K562 (cell line): ENCODE measurements at regions of chr16 and their contacts with region 1.

Region 1: GRCh38 chr16:49592546-49593423 is 219.2 kb downstream of the C16orf78 start:
- DNase-seq: peak; percentile 44 to 74 (median 69)
- ATAC-seq: peak; percentile 92
- H3K4me3 ChIP-seq: no peak overlapping the region
- H3K27ac ChIP-seq: no peak overlapping the region
- H3K4me1 ChIP-seq: no peaks in the 10 kb centered on the region
- H3K27me3 ChIP-seq: peaks cover 15 to 42% of the 10 kb centered on the region in 2 experiments; a peak in 4 of 5 replicates
- CTCF ChIP-seq: peak; percentile 60 to 73 (median 62)
- EP300 ChIP-seq: no peak
- POLR2A ChIP-seq: no peak
- RAD21 ChIP-seq: peak in 1 of 2 experiments; percentile 47; a peak in 2 of 4 replicates

Region 2: DNA sequence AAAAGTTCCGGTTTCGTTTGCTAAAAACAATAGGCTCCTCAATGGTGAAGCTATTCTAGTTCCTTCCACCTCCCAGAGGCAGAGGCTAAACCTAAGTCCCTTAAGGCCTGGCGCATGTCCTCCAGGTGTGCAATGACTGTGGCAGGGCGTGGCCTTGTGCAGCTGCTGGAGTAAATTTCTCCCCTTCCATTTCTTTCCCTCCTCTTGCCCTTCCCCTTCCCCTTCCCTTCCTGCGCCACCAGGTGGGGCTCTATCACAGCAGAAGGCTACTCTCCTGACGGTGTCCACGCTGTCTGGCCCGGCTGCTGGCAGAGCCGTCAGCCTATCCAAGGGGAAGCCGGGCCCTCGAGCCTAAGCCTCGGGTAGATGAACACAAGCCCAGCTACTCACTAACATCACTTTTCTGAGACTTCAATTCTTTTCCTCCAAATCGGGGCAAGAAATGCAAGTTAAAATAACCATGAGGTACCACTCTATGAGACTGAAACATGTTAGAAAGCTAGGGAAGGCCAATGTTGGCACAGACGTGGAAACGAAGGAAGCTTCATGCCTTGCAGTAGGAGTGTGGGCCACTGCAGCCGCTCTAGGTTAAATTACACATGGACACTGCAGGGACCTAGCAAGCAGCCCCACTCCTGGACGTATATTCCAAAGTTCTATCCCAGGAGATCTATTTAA is 184.8 kb before region 1 on chr16:
- CTCF ChIA-PET with region 1: interaction called, 8 read pairs
- POLR2A ChIA-PET with region 1: no interaction called
- in situ Hi-C with region 1: no loop called
- intact Hi-C with region 1: loop called (anchors 1 kb)
- DNase-seq: peak; percentile 65 to 76 (median 74)
- ATAC-seq: peak; percentile 99
- H3K4me3 ChIP-seq: no peak overlapping the region
- H3K27ac ChIP-seq: no peak overlapping the region
- H3K4me1 ChIP-seq: no peaks in the 10 kb centered on the region
- H3K27me3 ChIP-seq: no peaks in the 10 kb centered on the region; a peak in 1 of 5 replicates
- CTCF ChIP-seq: peak; percentile 79 to 82 (median 81)
- EP300 ChIP-seq: no peak
- POLR2A ChIP-seq: no peak
- RAD21 ChIP-seq: peak; percentile 64 to 84

Region 3: GRCh38 chr16:49625316-49626065 is 32.7 kb after region 1 on chr16:
- CTCF ChIA-PET with region 1: no interaction called
- POLR2A ChIA-PET with region 1: no interaction called
- in situ Hi-C with region 1: no loop called
- intact Hi-C with region 1: no loop called
- DNase-seq: no peak
- ATAC-seq: no peak
- H3K4me3 ChIP-seq: no peak overlapping the region
- H3K27ac ChIP-seq: no peak overlapping the region
- H3K4me1 ChIP-seq: peaks cover 7 to 14% of the 10 kb centered on the region in 2 experiments; a peak in 4 of 5 replicates
- H3K27me3 ChIP-seq: 0 out of 5 replicates have a peak, but pooled peaks cover 0 to 6% of the 10 kb centered on the region in 2 experiments
- CTCF ChIP-seq: no peak
- EP300 ChIP-seq: no peak
- POLR2A ChIP-seq: no peak
- RAD21 ChIP-seq: no peak